Activated CD4-positive, alpha-beta memory T cell treated with anti-CD3 and anti-CD28 coated beads for 36 hours (primary cell): ENCODE measurements at regions of chr5 and their contacts with region 1.

Region 1: DNA sequence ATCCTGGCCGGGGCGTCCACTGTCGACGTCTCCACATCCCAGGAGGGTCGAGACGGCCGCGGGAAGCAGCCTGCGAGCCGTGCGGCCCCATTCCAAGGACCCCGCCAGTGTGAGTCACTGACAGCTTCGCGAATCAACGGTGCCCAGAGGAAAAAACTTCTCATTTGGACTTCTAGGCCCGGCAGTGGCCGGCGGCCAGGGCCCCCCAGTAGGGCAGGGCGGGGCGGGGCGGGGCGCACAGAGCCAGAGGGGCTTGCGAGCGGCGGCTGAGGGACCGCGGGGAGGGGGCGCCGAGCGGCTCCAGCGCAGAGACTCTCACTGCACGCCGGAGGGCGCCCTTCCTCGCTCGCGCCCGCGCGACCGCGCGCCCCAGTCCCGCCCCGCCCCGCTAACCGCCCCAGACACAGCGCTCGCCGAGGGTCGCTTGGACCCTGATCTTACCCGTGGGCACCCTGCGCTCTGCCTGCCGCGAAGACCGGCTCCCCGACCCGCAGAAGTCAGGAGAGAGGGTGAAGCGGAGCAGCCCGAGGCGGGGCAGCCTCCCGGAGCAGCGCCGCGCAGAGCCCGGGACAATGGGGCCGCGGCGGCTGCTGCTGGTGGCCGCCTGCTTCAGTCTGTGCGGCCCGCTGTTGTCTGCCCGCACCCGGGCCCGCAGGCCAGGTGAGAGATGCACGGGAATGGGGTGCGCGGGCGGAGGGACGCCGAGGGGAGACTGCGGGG is at the start of gene F2R:
- DNase-seq: peak; percentile 65
- H3K4me3 Mint-ChIP-seq: peak within 1 kb of the TSS; percentile 81
- H3K27ac Mint-ChIP-seq: peak within 1 kb of the TSS; percentile 54
- H3K4me1 Mint-ChIP-seq: peaks cover 37% of the 10 kb centered on the region
- H3K27me3 Mint-ChIP-seq: peaks cover 30% of the 10 kb centered on the region
- total RNA-seq, gene F2R: 6.5 to 6.8 TPM

Region 2: DNA sequence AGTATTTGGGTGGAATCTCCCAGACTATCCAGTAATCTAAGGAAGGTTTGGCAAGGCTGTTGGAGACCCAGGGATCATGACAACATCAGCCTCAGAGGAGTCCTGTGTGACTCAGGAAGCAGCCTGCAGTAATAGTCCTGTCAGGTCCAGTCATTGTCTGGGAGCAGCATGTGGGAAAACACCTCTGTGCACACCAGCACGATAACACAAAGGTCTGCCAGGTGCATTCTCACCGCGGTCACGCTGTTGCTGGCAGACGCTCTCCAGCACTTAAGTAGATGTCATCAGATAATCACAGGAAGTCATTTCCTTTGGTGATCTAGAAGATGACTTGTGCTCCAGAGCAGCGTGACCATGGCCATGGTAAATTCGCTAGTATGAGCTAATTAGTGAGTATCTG is 412.0 kb before region 1 on chr5:
- CTCF ChIA-PET with region 1: no interaction called
- POLR2A ChIA-PET with region 1: no interaction called
- intact Hi-C with region 1: no loop called
- DNase-seq: peak; percentile 73
- H3K4me3 Mint-ChIP-seq: no peak overlapping the region
- H3K27ac Mint-ChIP-seq: no peak overlapping the region
- H3K4me1 Mint-ChIP-seq: peaks cover 30% of the 10 kb centered on the region
- H3K27me3 Mint-ChIP-seq: no peaks in the 10 kb centered on the region

Region 3: DNA sequence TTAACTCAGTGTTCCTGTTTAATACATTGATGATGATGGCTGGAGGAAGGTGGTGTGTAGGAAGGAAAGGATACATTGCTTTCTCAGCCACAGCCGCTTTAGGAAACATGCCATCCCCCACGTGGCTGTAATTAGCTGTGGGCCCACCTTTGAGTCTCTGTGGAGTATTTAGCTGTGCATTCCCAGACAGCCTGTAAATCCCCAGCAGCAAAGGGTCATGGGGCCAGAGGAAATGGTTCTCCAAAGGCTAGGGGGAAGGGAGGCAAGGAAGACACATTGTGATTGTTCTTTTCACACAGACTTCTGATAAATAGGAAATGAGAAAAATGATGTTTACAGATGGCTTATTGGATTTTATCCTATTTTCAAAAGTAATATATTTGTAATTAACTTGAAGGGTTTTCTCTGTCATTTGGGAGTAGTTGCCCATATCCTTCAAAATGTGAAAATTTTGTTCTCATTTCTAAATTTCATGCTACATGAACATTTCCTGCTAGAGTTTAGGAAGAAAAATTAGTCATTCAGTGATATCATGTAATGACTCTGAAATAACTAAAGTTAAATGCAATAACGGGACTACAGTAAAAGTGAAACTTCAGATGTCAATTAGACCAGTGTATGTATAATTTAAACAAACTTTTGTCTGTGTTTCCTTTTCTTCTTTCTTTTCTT is 24.3 kb before region 1 on chr5:
- CTCF ChIA-PET with region 1: interaction called, 4 read pairs
- POLR2A ChIA-PET with region 1: no interaction called
- intact Hi-C with region 1: loop called (anchors 1 kb)
- DNase-seq: no peak
- H3K4me3 Mint-ChIP-seq: no peak overlapping the region
- H3K27ac Mint-ChIP-seq: peak overlapping the region; percentile 62
- H3K4me1 Mint-ChIP-seq: peaks cover 23% of the 10 kb centered on the region
- H3K27me3 Mint-ChIP-seq: no peaks in the 10 kb centered on the region

Region 4: GRCh38 chr5:76733049-76733417 is 17.1 kb after region 1 on chr5:
- CTCF ChIA-PET with region 1: interaction called, 6 read pairs
- POLR2A ChIA-PET with region 1: interaction called, 14 read pairs
- intact Hi-C with region 1: no loop called
- DNase-seq: peak; percentile 77
- H3K4me3 Mint-ChIP-seq: peak overlapping the region; percentile 46
- H3K27ac Mint-ChIP-seq: peak overlapping the region; percentile 86
- H3K4me1 Mint-ChIP-seq: peaks cover 29% of the 10 kb centered on the region
- H3K27me3 Mint-ChIP-seq: peaks cover 3% of the 10 kb centered on the region

Region 5: GRCh38 chr5:76855961-76856360 is 140.1 kb after region 1 on chr5:
- CTCF ChIA-PET with region 1: no interaction called
- POLR2A ChIA-PET with region 1: no interaction called
- intact Hi-C with region 1: loop called (anchors 10 kb)
- DNase-seq: peak; percentile 61
- H3K4me3 Mint-ChIP-seq: no peak overlapping the region
- H3K27ac Mint-ChIP-seq: peak overlapping the region; percentile 88
- H3K4me1 Mint-ChIP-seq: peaks cover 37% of the 10 kb centered on the region
- H3K27me3 Mint-ChIP-seq: no peaks in the 10 kb centered on the region